Naive thymus-derived CD4-positive, alpha-beta T cell (primary cell): ENCODE measurements at regions of chr1 and their contacts with region 1.

Region 1: GRCh38 chr1:226798427-226799411 is 59.6 kb upstream of the ITPKB start:
- DNase-seq: peak; percentile 24 to 75 (median 67)
- ATAC-seq: peak; percentile 85
- H3K4me3 ChIP-seq: peak overlapping the region; percentile 33
- H3K4me3 Mint-ChIP-seq: peak overlapping the region; percentile 66 to 86 (median 72)
- H3K27ac ChIP-seq: peak overlapping the region; percentile 67
- H3K27ac Mint-ChIP-seq: peak overlapping the region; percentile 96 to 100 (median 99)
- H3K4me1 ChIP-seq: peaks cover 31 to 33% of the 10 kb centered on the region in 2 donors
- H3K4me1 Mint-ChIP-seq: peaks cover 27 to 47% (median 40%) of the 10 kb centered on the region in 7 donors
- H3K27me3 ChIP-seq: no peaks in the 10 kb centered on the region
- H3K27me3 Mint-ChIP-seq: peaks cover 0 to 12% (median 0%) of the 10 kb centered on the region in 5 donors

Region 2: DNA sequence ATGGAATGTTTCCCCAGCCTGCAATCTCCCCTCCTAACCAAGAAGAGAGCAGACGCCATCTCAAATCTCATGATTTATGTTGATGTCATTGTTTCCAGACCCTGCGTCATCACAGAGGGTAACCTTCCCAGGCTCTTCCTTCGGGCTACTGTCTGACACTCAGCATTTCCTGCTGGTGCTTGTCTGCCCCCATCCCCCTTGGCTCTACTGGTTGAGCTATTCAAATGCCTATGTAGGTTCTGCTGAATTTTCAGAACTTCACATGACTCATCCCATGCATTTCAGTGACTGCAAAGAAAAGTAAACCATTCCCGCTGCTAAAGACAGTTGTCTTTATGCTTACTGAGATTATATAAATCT is 34.8 kb before region 1 on chr1:
- CTCF ChIA-PET with region 1: no interaction called
- POLR2A ChIA-PET with region 1: interaction called, 3 read pairs
- intact Hi-C with region 1: loop called in 1 of 2 experiments (anchors 5 kb)
- DNase-seq: peak in 3 of 9 donors; percentile 15 to 47 (median 17)
- ATAC-seq: peak; percentile 27
- H3K4me3 ChIP-seq: no peak overlapping the region
- H3K4me3 Mint-ChIP-seq: peak overlapping the region in 2 of 10 donors; percentile 9 to 32
- H3K27ac ChIP-seq: no peak overlapping the region
- H3K27ac Mint-ChIP-seq: peak overlapping the region in 2 of 9 donors; percentile 6 to 36
- H3K4me1 ChIP-seq: peaks cover 3 to 19% of the 10 kb centered on the region in 2 donors
- H3K4me1 Mint-ChIP-seq: peaks cover 18 to 32% (median 26%) of the 10 kb centered on the region in 7 donors
- H3K27me3 ChIP-seq: no peaks in the 10 kb centered on the region
- H3K27me3 Mint-ChIP-seq: peaks cover 0 to 18% (median 0%) of the 10 kb centered on the region in 5 donors

Region 3: GRCh38 chr1:226782845-226783601 is 15.7 kb before region 1 on chr1:
- CTCF ChIA-PET with region 1: interaction called, 3 read pairs
- POLR2A ChIA-PET with region 1: interaction called, 10 read pairs
- intact Hi-C with region 1: no loop called
- DNase-seq: no peak
- ATAC-seq: no peak
- H3K4me3 ChIP-seq: no peak overlapping the region
- H3K4me3 Mint-ChIP-seq: no peak overlapping the region
- H3K27ac ChIP-seq: no peak overlapping the region
- H3K27ac Mint-ChIP-seq: peak overlapping the region in 1 of 9 donors; percentile 41
- H3K4me1 ChIP-seq: no peaks in the 10 kb centered on the region
- H3K4me1 Mint-ChIP-seq: peaks cover 4 to 15% (median 5%) of the 10 kb centered on the region in 7 donors
- H3K27me3 ChIP-seq: no peaks in the 10 kb centered on the region
- H3K27me3 Mint-ChIP-seq: peaks cover 0 to 12% (median 0%) of the 10 kb centered on the region in 5 donors

Region 4: DNA sequence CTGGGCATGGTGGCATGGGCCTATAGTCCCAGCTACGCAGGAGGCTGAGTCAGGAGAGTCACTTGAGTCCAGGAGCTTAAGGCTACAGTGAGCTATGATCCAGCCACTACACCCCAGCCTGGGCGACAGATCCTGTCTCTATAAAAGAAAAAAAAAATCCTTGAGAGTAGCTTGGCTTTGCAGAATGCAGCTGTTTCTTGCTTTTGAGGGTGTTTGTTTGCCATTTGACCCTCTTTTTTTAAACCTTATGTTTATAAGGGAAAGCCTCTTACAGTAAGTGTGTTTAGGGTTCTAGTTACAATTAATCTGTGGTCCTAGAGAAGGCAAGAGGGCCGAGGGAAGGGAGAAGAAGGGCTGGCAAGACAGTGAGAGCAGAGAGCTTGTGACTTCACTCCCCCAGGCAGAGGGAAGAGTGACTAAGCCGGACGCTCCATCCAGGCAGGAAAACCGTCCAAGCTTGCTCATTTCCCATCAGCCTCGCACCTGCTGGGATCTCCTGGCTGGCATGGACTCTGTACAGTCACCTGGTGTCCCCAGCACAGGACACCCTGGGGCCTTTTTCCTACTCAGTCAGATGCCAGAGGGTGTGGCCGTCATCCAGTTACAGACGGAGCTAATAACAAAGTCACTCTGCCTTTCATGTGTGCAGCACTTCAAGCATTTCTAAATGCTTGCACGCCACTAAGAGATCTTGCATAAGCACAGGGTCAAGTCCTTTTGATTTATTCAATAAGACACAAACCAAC is 16.2 kb after region 1 on chr1:
- CTCF ChIA-PET with region 1: interaction called, 4 read pairs
- POLR2A ChIA-PET with region 1: interaction called, 5 read pairs
- intact Hi-C with region 1: loop called in 1 of 2 experiments (anchors 2 kb)
- DNase-seq: no peak
- ATAC-seq: no peak
- H3K4me3 ChIP-seq: no peak overlapping the region
- H3K4me3 Mint-ChIP-seq: peak overlapping the region in 2 of 10 donors; percentile 8 to 46
- H3K27ac ChIP-seq: no peak overlapping the region
- H3K27ac Mint-ChIP-seq: peak overlapping the region in 6 of 9 donors; percentile 5 to 80 (median 32)
- H3K4me1 ChIP-seq: peaks cover 0 to 9% of the 10 kb centered on the region in 2 donors
- H3K4me1 Mint-ChIP-seq: peaks cover 0 to 19% (median 16%) of the 10 kb centered on the region in 7 donors
- H3K27me3 ChIP-seq: no peaks in the 10 kb centered on the region
- H3K27me3 Mint-ChIP-seq: peaks cover 0 to 11% (median 0%) of the 10 kb centered on the region in 5 donors